Mammary epithelial cell (primary cell): ENCODE measurements at regions of chr17 and their contacts with region 1.

Region 1: GRCh38 chr17:17663160-17664063 is 17.8 kb upstream of the RAI1 start:
- DNase-seq: peak; percentile 92
- H3K4me3 ChIP-seq: no peak overlapping the region
- H3K27ac ChIP-seq: no peak overlapping the region
- H3K4me1 ChIP-seq: peaks cover 36% of the 10 kb centered on the region
- H3K27me3 ChIP-seq: no peaks in the 10 kb centered on the region
- CTCF ChIP-seq: no peak

Region 2: DNA sequence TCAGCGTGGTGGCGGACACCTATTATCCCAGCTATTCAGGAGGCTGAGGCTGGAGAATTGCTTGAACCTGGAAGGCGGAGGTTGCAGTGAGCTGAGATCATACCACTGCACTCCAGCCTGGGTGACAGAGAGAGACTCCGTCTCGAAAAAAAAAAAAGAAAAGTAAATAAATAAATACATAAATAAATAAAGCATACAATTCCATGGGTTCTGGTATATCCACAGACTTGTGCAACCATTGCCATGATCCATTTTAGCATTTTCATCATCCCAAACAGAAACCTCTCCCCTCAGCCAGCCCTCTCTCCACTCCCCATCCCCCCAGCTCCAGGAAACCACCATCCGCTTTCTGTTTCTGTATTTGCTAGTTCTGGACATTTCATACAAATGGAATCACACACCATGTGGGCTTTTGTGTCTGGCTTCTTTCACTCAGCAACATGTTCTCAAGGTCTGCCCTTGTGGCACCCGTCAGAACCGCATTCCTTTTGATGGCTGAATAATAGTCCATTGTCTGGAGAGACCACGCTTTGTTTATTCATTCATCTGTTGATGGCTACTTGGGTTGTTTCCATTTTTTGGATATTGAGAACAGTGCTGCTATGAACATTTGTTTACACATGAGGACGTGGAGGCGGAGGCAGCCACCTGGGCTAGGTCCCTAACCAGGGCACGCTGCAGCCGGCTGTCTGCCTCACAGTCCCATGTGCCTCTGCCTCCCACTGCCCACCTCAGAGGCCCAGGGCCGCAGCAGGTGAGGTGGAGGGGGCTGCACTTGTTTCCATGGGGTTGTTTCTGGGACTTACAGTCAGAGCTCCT is 284.0 kb before region 1 on chr17:
- CTCF ChIA-PET with region 1: no interaction called
- dilution Hi-C with region 1: no loop called
- in situ Hi-C with region 1: no loop called
- intact Hi-C with region 1: no loop called
- DNase-seq: peak; percentile 27
- H3K4me3 ChIP-seq: no peak overlapping the region
- H3K27ac ChIP-seq: no peak overlapping the region
- H3K4me1 ChIP-seq: no peaks in the 10 kb centered on the region
- H3K27me3 ChIP-seq: no peaks in the 10 kb centered on the region
- CTCF ChIP-seq: no peak

Region 3: GRCh38 chr17:17580662-17581470 is 82.5 kb before region 1 on chr17:
- CTCF ChIA-PET with region 1: no interaction called
- dilution Hi-C with region 1: loop called (anchors 5 kb)
- in situ Hi-C with region 1: no loop called
- intact Hi-C with region 1: no loop called
- DNase-seq: no peak
- H3K4me3 ChIP-seq: no peak overlapping the region
- H3K27ac ChIP-seq: no peak overlapping the region
- H3K4me1 ChIP-seq: peaks cover 4% of the 10 kb centered on the region
- H3K27me3 ChIP-seq: no peaks in the 10 kb centered on the region
- CTCF ChIP-seq: no peak

Region 4: GRCh38 chr17:17605729-17606088 is 57.7 kb before region 1 on chr17:
- CTCF ChIA-PET with region 1: no interaction called
- dilution Hi-C with region 1: no loop called
- in situ Hi-C with region 1: no loop called
- intact Hi-C with region 1: no loop called
- DNase-seq: no peak
- H3K4me3 ChIP-seq: no peak overlapping the region
- H3K27ac ChIP-seq: no peak overlapping the region
- H3K4me1 ChIP-seq: no peaks in the 10 kb centered on the region
- H3K27me3 ChIP-seq: no peaks in the 10 kb centered on the region
- CTCF ChIP-seq: no peak

Region 5: GRCh38 chr17:17624741-17625140 is 38.7 kb before region 1 on chr17:
- CTCF ChIA-PET with region 1: no interaction called
- dilution Hi-C with region 1: loop called (anchors 5 kb)
- in situ Hi-C with region 1: no loop called
- intact Hi-C with region 1: no loop called
- DNase-seq: no peak
- H3K4me3 ChIP-seq: no peak overlapping the region
- H3K27ac ChIP-seq: no peak overlapping the region
- H3K4me1 ChIP-seq: no peaks in the 10 kb centered on the region
- H3K27me3 ChIP-seq: no peaks in the 10 kb centered on the region
- CTCF ChIP-seq: no peak

Region 6: DNA sequence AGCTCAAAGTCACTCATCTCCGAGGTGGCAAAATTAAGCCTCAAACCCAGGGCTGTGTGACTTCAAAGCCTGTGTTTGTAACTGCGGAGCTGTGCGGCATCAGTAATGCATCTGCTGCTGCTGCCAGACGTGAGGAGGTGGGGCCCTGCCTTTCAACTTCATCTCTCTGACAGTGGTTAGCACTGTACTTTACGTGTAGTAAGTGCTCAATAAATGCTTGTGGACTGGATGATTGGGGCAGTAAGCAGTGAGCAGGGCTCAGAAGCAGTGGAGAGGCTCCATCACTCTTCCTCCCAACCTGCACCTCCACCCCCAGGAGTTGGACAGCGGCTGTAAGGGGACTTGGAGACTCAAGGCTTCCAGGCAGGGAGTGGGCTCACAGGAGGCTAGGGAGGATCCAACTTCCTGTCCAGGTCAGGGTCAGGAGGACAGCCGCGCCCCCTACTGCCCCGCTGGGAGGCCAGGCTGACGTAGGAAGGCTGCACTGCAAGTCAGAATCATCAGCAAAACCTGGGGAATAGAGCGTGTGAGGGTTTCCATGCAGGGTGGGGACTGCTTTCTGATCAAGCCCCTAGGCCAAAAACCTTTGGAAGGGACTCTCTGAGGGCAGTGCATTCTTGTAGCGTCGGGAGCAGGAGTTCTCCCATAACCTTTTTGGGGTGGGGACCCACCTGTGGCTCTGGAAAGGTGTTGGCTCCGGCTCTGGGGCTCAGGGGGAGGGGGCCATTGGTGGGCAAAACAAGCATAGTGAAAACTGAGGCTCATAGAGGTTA is 39.6 kb after region 1 on chr17:
- CTCF ChIA-PET with region 1: no interaction called
- dilution Hi-C with region 1: loop called (anchors 5 kb)
- in situ Hi-C with region 1: no loop called
- intact Hi-C with region 1: no loop called
- DNase-seq: no peak
- H3K4me3 ChIP-seq: no peak overlapping the region
- H3K27ac ChIP-seq: no peak overlapping the region
- H3K4me1 ChIP-seq: peaks cover 13% of the 10 kb centered on the region
- H3K27me3 ChIP-seq: no peaks in the 10 kb centered on the region
- CTCF ChIP-seq: no peak